GM12878 (cell line): ENCODE measurements at regions of chr4 and their contacts with region 1.

Region 1: GRCh38 chr4:155657169-155657568 is 9.5 kb upstream of the GUCY1A1 start:
- DNase-seq: no peak
- ATAC-seq: no peak
- H3K4me3 ChIP-seq: no peak overlapping the region
- H3K27ac ChIP-seq: no peak overlapping the region
- H3K4me1 ChIP-seq: no peaks in the 10 kb centered on the region
- H3K27me3 ChIP-seq: 0 out of 4 replicates have a peak, but pooled peaks cover 0 to 2% of the 10 kb centered on the region in 2 experiments
- CTCF ChIP-seq: no peak
- EP300 ChIP-seq: no peak
- POLR2A ChIP-seq: no peak
- RAD21 ChIP-seq: no peak

Region 2: GRCh38 chr4:155592179-155592937 is 64.8 kb before region 1 on chr4:
- CTCF ChIA-PET with region 1: no interaction called
- POLR2A ChIA-PET with region 1: no interaction called
- RAD21 ChIA-PET with region 1: interaction called, 3 read pairs
- SMC1A ChIA-PET with region 1: interaction called, 11 read pairs
- in situ Hi-C with region 1: no loop called
- intact Hi-C with region 1: no loop called
- DNase-seq: no peak
- ATAC-seq: no peak
- H3K4me3 ChIP-seq: no peak overlapping the region
- H3K27ac ChIP-seq: no peak overlapping the region
- H3K4me1 ChIP-seq: no peaks in the 10 kb centered on the region
- H3K27me3 ChIP-seq: no peaks in the 10 kb centered on the region; a peak in 1 of 4 replicates
- CTCF ChIP-seq: no peak
- EP300 ChIP-seq: no peak
- POLR2A ChIP-seq: no peak
- RAD21 ChIP-seq: no peak

Region 3: GRCh38 chr4:155629183-155629825 is 27.9 kb before region 1 on chr4:
- CTCF ChIA-PET with region 1: interaction called, 9 read pairs
- POLR2A ChIA-PET with region 1: interaction called, 11 read pairs
- RAD21 ChIA-PET with region 1: interaction called, 25 read pairs
- SMC1A ChIA-PET with region 1: interaction called, 28 read pairs
- in situ Hi-C with region 1: no loop called
- intact Hi-C with region 1: no loop called
- DNase-seq: no peak
- ATAC-seq: peak; percentile 19; the same call in 2 of the 3 replicates
- H3K4me3 ChIP-seq: no peak overlapping the region
- H3K27ac ChIP-seq: no peak overlapping the region
- H3K4me1 ChIP-seq: no peaks in the 10 kb centered on the region
- H3K27me3 ChIP-seq: no peaks in the 10 kb centered on the region
- CTCF ChIP-seq: no peak
- EP300 ChIP-seq: no peak
- POLR2A ChIP-seq: no peak
- RAD21 ChIP-seq: no peak

Region 4: GRCh38 chr4:155646001-155646400 is 11.2 kb before region 1 on chr4:
- CTCF ChIA-PET with region 1: interaction called, 6 read pairs
- POLR2A ChIA-PET with region 1: interaction called, 23 read pairs
- RAD21 ChIA-PET with region 1: interaction called, 32 read pairs
- SMC1A ChIA-PET with region 1: interaction called, 26 read pairs
- in situ Hi-C with region 1: no loop called
- intact Hi-C with region 1: no loop called
- DNase-seq: no peak
- ATAC-seq: no peak
- H3K4me3 ChIP-seq: no peak overlapping the region
- H3K27ac ChIP-seq: no peak overlapping the region
- H3K4me1 ChIP-seq: no peaks in the 10 kb centered on the region
- H3K27me3 ChIP-seq: no peaks in the 10 kb centered on the region
- CTCF ChIP-seq: no peak
- EP300 ChIP-seq: no peak
- POLR2A ChIP-seq: no peak
- RAD21 ChIP-seq: no peak

Region 5: DNA sequence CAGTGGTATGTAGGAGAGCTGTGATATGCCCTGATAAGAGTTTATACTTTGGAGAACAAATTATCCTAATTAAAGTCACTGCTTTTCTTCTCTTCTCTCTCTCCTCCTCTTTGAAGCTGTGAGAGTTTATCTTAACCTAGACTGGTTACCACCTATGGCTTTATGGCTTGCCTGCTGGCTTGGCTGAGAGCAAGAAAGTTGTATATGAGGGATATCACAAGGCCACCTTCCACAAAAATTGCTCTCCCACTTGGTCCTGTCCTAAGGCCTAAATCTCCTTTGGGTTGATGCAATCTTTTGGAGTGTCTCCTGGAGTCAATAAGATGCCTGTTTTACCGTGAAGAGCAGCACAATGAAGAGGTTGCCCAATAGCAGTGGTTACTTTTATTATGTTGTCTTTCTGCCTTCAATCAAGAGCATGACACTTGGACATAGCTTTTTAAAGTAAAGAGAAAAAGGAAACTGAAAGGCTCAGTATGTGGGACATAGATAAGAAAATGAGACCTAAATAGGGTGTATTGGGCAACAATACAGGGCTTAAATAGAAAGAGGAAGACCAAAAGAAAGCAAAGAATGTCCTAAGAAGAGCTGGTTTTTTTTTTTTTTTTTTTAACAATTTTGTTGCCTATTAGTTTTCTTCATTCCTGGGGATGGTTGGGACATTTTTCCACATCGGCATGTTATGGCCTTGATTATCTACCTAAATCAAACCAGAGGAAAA is 18.7 kb after region 1 on chr4:
- CTCF ChIA-PET with region 1: interaction called, 10 read pairs
- POLR2A ChIA-PET with region 1: interaction called, 10 read pairs
- RAD21 ChIA-PET with region 1: interaction called, 41 read pairs
- SMC1A ChIA-PET with region 1: interaction called, 42 read pairs
- in situ Hi-C with region 1: no loop called
- intact Hi-C with region 1: no loop called
- DNase-seq: no peak
- ATAC-seq: peak; percentile 86
- H3K4me3 ChIP-seq: no peak overlapping the region
- H3K27ac ChIP-seq: no peak overlapping the region
- H3K4me1 ChIP-seq: no peaks in the 10 kb centered on the region
- H3K27me3 ChIP-seq: no peaks in the 10 kb centered on the region
- CTCF ChIP-seq: no peak
- EP300 ChIP-seq: no peak
- POLR2A ChIP-seq: no peak
- RAD21 ChIP-seq: no peak

Region 6: GRCh38 chr4:155705664-155706063 is 48.5 kb after region 1 on chr4:
- CTCF ChIA-PET with region 1: interaction called, 5 read pairs
- POLR2A ChIA-PET with region 1: interaction called, 4 read pairs
- RAD21 ChIA-PET with region 1: interaction called, 13 read pairs
- SMC1A ChIA-PET with region 1: interaction called, 39 read pairs
- in situ Hi-C with region 1: no loop called
- intact Hi-C with region 1: no loop called
- DNase-seq: no peak
- ATAC-seq: no peak
- H3K4me3 ChIP-seq: no peak overlapping the region
- H3K27ac ChIP-seq: no peak overlapping the region
- H3K4me1 ChIP-seq: no peaks in the 10 kb centered on the region
- H3K27me3 ChIP-seq: no peaks in the 10 kb centered on the region
- CTCF ChIP-seq: no peak
- EP300 ChIP-seq: no peak
- POLR2A ChIP-seq: no peak
- RAD21 ChIP-seq: no peak